ENCODE measurements at regions of chr22 and their contacts with region 1.

Region 1: DNA sequence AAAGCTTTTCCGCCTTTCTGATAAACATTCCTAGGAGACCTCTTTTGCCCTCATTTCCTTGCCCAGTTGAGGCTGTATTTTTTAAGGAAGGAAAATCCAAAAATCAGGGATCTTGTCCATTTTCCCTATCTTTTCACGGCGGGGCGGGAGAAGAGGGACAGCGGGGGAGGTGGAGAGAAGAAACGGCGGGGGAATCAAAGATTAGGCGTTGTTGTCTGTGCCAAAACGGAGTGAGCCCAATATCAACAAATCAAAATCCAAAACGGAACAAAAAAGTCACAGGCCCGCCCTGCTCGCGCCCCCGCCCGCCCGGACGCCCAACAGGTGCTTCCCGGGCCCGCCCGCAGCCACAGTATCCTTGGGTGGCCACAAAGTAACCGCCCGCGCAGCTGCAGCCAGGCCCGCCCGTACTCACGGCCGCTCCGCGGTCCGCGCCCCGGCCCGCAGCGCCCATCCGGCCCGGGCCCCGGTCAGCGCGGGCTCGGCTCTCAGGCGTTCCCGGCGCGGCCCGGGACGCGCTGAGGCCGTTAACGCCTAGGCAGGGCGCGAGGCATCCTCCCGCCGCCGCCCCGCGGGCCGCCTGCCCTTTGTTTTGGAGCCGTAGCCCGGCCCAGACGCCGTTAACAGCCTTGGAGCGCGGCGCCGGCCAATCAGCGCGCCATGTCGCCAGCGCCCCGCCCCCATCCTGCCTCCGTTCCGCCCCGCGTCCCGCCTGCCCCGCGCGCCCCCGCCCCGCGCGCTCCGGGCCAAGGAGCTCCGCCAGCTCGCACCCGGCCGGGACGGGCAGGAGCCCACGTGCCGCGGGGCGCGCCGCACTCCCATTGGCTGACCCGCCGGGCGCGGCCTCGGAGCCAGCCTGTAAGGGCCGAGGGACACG is at the start of gene YPEL1:
- DNase-seq: peak; percentile 100
- ATAC-seq: peak; percentile 96
- H3K4me3 ChIP-seq: peak within 1 kb of the TSS; percentile 52
- H3K27ac ChIP-seq: peak within 1 kb of the TSS; percentile 42
- H3K4me1 ChIP-seq: peaks cover 17 to 29% of the 10 kb centered on the region in 2 experiments
- H3K27me3 ChIP-seq: peaks cover 52 to 57% of the 10 kb centered on the region in 2 experiments
- CTCF ChIP-seq: peak in 1 of 3 experiments; percentile 1; a peak in 2 of 6 replicates
- EP300 ChIP-seq: peak; percentile 43
- POLR2A ChIP-seq: no peak
- RAD21 ChIP-seq: peak in 1 of 2 experiments; percentile 59; a peak in 2 of 4 replicates
- polyA plus RNA-seq, gene YPEL1: 0.07 to 0.10 TPM

Region 2: DNA sequence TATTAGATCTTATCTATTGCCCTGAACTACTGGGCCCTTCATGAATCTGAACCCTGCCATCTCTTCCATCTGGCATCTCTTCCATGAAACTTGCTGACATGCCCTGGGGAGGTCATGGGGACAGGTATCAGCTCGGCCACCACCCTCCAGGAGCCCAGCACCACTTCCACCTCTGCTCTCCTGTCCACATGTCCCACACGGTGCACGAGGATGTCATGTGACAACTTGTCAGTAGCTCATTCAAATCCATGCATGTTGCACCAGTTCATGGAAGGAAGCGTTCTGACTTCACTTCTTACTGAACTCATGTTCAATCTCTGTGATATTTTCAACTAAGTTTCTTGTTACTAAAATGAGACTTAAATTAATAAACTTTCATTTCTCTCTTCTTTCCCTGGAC is 16.4 kb before region 1 on chr22:
- CTCF ChIA-PET with region 1: no interaction called
- POLR2A ChIA-PET with region 1: interaction called, 53 read pairs
- in situ Hi-C with region 1: no loop called
- intact Hi-C with region 1: no loop called
- DNase-seq: peak in 2 of 4 experiments; percentile 61 to 63
- ATAC-seq: peak; percentile 29
- H3K4me3 ChIP-seq: no peak overlapping the region
- H3K27ac ChIP-seq: no peak overlapping the region
- H3K4me1 ChIP-seq: peaks cover 0 to 6% of the 10 kb centered on the region in 2 experiments; a peak in 3 of 5 replicates
- H3K27me3 ChIP-seq: peaks cover 31 to 56% of the 10 kb centered on the region in 2 experiments
- CTCF ChIP-seq: no peak
- EP300 ChIP-seq: no peak
- POLR2A ChIP-seq: no peak
- RAD21 ChIP-seq: no peak

Region 3: DNA sequence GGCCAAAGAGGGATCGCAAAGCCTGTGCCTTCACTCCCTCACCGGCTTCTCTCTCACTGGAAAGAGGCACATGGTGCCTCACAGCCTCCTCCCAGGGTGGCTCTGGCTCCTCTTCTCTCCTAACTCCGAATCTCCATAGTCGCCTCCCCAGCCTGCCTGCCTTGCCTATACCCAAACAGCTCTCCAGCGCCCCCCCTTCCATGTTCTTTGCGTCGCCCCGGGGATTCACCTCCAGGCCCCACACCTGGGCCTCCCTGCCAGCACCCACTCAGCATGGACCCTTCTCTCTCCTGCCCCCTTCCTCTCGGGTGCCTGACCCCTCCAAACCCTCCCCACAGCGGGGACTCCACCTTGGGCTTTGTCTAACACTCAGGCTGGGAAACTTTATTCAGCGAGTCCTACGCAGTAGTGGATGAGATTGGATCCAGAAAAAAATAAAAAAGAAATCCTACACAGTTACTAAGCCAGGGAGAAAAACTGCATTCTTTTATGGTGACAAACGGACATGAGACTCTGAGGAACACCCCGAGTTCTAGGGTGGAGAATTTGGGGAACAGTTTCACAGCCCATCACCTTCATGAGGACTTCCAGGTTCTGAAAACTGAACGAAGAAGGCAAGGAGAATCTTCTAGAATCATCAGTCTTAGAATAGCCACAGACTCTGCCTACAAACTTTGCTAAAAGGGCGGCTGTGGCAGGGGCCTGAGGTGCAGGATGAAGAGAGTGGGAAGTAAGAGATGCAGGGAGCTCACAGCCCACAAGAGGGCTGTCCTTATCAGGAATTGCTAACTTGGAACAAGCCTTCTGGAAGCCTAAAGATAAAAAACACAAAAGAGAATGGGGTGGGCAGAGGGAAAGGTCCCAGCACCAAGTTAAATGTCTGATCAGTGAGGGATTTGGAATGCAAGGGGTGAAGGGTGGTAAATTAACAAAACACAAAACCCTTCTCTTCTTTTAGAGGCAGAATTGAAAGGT is 211.9 kb after region 1 on chr22:
- CTCF ChIA-PET with region 1: no interaction called
- POLR2A ChIA-PET with region 1: interaction called, 12 read pairs
- in situ Hi-C with region 1: no loop called
- intact Hi-C with region 1: no loop called
- DNase-seq: peak; percentile 98 to 100 (median 100)
- ATAC-seq: peak; percentile 84
- H3K4me3 ChIP-seq: no peak overlapping the region; the same call in 1 of the 2 replicates
- H3K27ac ChIP-seq: peak overlapping the region; percentile 52
- H3K4me1 ChIP-seq: peaks cover 35 to 67% of the 10 kb centered on the region in 2 experiments
- H3K27me3 ChIP-seq: no peaks in the 10 kb centered on the region
- CTCF ChIP-seq: peak in 2 of 3 experiments; percentile 98 to 99; a peak in 4 of 6 replicates
- EP300 ChIP-seq: peak; percentile 97
- POLR2A ChIP-seq: no peak
- RAD21 ChIP-seq: no peak

Measured in K562 (cell line).